BJ (cell line): ENCODE measurements at regions of chr17 and their contacts with region 1.

Region 1: GRCh38 chr17:43946069-43946696 is 3.9 kb upstream of the PPY start:
- DNase-seq: no peak
- H3K4me3 ChIP-seq: no peak overlapping the region
- H3K27me3 ChIP-seq: peaks cover 7% of the 10 kb centered on the region
- CTCF ChIP-seq: no peak

Region 2: GRCh38 chr17:43768382-43768781 is 177.8 kb before region 1 on chr17:
- CTCF ChIA-PET with region 1: no interaction called
- POLR2A ChIA-PET with region 1: no interaction called
- DNase-seq: no peak
- H3K4me3 ChIP-seq: no peak overlapping the region
- H3K27me3 ChIP-seq: no peaks in the 10 kb centered on the region
- CTCF ChIP-seq: no peak

Region 3: GRCh38 chr17:43927060-43927864 is 18.9 kb before region 1 on chr17:
- CTCF ChIA-PET with region 1: interaction called, 27 read pairs
- POLR2A ChIA-PET with region 1: no interaction called
- DNase-seq: no peak
- H3K4me3 ChIP-seq: no peak overlapping the region
- H3K27me3 ChIP-seq: peaks cover 27% of the 10 kb centered on the region
- CTCF ChIP-seq: no peak

Region 4: GRCh38 chr17:43994272-43995149 is 48.3 kb after region 1 on chr17:
- CTCF ChIA-PET with region 1: interaction called, 108 read pairs
- POLR2A ChIA-PET with region 1: no interaction called
- DNase-seq: no peak
- H3K4me3 ChIP-seq: peak overlapping the region; percentile 33
- H3K27me3 ChIP-seq: peaks cover 5% of the 10 kb centered on the region
- CTCF ChIP-seq: peak; percentile 89

Region 5: DNA sequence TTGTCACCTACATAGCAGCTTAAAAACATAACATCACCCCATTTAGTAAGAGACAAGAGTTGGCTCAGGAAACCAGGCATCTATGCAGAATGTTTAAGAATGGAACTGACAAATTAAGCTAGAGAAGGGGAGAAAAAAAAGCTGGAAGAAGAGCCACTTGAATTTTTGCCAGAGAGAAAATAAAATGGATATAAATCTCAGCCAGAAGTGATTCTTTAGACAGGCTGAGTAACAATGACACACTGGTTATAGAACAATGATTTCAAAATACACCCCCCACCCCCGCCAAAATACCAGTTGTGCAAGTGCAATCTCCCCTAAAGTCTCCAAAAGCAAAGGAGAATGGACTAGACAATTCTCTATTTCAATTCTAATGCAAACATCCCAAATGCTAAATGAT is 97.9 kb after region 1 on chr17:
- CTCF ChIA-PET with region 1: interaction called, 42 read pairs
- POLR2A ChIA-PET with region 1: no interaction called
- DNase-seq: no peak
- H3K4me3 ChIP-seq: no peak overlapping the region
- H3K27me3 ChIP-seq: no peaks in the 10 kb centered on the region
- CTCF ChIP-seq: no peak

Region 6: DNA sequence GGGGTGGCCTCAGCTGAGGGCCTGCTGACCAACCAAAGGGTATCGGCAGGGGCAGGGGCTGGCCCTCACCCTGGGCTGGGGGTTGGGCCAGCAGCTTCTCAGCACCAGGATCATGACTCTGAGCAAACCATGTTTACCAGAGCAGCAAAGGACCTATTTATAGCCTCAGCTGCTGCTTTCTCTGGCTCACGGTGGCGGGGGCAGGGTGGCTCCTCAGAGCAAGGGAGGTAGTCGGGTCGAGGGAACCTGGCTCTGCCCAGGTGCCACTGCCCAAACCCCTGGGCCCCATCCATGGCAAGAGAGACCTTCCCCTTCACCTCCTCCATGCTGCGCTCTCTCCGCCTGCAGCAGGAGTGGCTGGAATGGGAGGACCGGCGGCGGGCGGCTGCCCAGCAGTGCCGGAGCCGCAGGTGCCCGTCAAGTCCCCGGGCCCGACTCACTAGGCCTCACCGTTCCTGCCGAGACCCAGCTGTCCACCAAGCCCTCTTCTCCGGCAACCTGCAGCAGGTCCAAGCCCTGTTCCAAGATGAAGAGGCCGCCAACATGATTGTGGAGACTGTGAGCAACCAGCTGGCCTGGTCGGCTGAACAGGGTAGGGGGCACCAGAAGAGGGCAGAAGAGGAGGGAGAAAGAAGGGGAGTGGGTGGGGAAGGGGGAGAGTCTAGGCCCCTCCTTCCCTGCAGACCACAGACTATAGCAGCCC is 224.5 kb after region 1 on chr17 and contains the start of gene ASB16:
- CTCF ChIA-PET with region 1: interaction called, 28 read pairs
- POLR2A ChIA-PET with region 1: no interaction called
- DNase-seq: no peak
- H3K4me3 ChIP-seq: no peak within 1 kb of the TSS
- H3K27me3 ChIP-seq: no peaks in the 10 kb centered on the region
- CTCF ChIP-seq: no peak
- polyA plus RNA-seq, gene ASB16: 0.04 TPM in 1 of 2 replicates, not detected in the other